ENCODE measurements at regions of chr14 and their contacts with region 1.

Region 1: GRCh38 chr14:96275177-96276112 is 19.4 kb downstream of the BDKRB1 start:
- DNase-seq: peak; percentile 22
- ATAC-seq: no peak
- H3K4me3 ChIP-seq: no peak overlapping the region
- H3K27ac ChIP-seq: no peak overlapping the region
- H3K4me1 ChIP-seq: no peaks in the 10 kb centered on the region
- H3K27me3 ChIP-seq: no peaks in the 10 kb centered on the region
- CTCF ChIP-seq: peak; percentile 91

Region 2: DNA sequence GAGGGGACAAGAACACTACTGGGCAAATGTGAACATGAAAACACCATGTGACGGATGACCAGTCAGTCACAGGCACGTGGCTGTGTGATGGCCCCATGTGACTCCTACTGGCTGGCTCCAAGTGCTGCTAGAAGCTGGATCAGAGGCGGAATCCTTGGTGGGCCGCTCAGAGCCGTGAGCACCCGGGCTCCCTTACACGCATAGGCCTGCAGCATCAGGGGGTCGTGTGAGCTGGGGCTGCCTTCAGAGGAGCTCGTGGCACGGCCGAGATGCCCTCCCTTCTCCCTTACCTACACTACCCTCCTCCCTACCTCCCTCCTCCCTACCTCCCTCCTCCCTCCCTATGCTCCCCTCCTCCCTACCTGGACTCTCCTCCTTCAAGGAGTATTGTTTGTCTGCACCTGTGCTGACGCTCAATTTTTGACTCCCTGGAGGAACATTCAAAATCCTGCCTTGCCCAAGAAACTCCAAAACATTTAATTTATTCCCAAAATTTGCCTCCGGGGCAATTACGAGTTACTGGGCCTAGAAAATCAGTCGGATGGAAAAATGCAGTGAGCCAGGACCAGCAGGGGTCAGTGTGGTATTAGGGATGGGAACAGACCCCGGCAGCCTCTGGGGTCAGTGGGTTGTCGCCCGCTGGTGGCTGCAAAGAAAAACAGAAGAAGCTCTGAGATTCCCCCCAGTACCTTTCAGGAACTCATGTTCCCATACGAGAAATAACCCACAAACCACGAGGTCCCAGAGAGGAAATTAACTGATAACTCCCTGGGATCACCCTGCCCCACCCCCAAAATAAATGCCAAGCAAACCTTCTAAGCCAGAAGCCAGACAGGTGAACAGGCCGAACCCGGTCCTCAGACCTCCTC is 175.1 kb before region 1 on chr14:
- CTCF ChIA-PET with region 1: interaction called, 8 read pairs
- POLR2A ChIA-PET with region 1: interaction called, 3 read pairs
- in situ Hi-C with region 1: no loop called
- intact Hi-C with region 1: loop called (anchors 1 kb)
- DNase-seq: peak; percentile 28
- ATAC-seq: peak; percentile 59
- H3K4me3 ChIP-seq: no peak overlapping the region
- H3K27ac ChIP-seq: no peak overlapping the region
- H3K4me1 ChIP-seq: peaks cover 7% of the 10 kb centered on the region
- H3K27me3 ChIP-seq: no peaks in the 10 kb centered on the region
- CTCF ChIP-seq: peak; percentile 88

Region 3: DNA sequence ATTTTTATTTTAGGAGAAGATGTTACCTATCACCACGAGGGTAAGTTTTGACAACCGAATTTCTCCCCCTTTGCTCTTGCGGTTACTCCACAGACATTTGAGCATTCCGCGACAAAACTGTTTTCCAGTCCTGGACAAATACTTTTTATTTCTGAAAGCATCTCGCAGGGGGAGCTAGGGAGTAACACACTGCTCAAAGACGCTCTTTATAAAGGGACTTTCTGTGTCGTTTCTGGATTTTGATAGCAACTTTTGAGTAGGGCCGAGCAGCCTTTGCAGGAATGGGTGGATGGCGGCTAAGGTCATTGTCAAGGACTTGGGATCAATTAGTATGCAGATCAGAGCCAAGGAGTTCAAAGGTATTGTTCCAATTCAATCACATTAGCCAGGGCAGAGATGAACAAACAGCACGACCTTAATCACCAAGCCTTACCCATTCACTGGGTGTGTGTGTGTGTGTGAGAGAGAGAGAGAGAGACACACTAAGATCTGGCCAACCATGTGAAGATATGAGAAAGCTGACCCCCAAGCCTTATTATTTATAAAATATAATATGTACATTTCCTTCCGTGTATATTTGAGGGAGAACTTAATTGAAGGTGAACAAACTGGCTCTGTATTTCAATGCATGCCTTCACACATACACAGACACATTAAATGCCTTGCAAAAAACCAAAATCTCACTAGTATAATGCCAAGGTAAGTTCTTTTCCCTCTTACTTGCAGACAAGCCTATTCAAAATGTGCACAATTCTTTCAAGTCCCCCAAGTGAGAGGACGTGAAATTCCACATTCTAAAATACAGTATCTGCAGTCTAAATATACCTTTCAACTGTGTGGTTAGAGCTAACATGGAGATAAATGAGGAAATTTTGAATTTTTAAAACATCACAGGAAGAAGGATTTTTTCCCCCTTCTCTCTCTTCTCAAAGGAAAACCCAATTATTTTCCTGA is 1135.5 kb after region 1 on chr14:
- CTCF ChIA-PET with region 1: no interaction called
- POLR2A ChIA-PET with region 1: no interaction called
- in situ Hi-C with region 1: no loop called
- intact Hi-C with region 1: no loop called
- DNase-seq: no peak
- ATAC-seq: no peak
- H3K4me3 ChIP-seq: no peak overlapping the region
- H3K27ac ChIP-seq: no peak overlapping the region
- H3K4me1 ChIP-seq: no peaks in the 10 kb centered on the region
- H3K27me3 ChIP-seq: no peaks in the 10 kb centered on the region
- CTCF ChIP-seq: peak; percentile 17